Right ventricle myocardium superior (tissue), 1 donor: ENCODE measurements at regions of chr20 and their contacts with region 1.

Region 1: DNA sequence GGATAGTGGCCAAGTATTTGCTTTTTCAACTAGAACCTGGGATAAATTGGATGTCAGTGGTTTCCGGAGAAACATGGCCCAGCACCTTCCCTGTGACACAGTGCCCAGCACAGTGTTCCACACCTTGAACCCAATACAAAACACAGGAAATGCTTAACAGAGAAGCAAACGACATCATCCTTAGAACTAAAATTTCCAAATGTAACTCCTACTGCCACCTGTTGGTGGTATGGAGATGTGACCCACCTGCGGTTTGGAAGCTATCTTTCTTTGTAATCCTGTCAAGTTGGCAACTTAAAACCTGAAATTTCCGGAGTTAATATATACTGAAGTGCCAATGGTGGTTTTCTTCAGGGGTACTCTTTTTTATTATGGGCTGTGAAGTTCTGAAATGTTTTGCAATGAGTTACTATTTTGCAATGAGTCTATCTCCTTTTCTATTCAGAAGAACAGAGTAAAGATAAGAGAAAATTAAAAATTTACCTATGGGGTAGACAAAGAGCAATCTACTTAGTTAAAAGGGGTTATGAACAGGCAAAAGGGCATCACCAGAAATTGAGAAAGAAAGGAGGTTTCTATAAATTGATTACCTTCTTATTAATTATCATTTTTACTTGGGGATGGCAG is 658.8 kb downstream of the PTPRT start:
- DNase-seq: no peak
- ATAC-seq: no peak

Region 2: GRCh38 chr20:41738604-41739206 is 792.2 kb before region 1 on chr20:
- intact Hi-C with region 1: loop called (anchors 10 kb)
- DNase-seq: peak; percentile 64
- ATAC-seq: peak; percentile 72

Region 3: DNA sequence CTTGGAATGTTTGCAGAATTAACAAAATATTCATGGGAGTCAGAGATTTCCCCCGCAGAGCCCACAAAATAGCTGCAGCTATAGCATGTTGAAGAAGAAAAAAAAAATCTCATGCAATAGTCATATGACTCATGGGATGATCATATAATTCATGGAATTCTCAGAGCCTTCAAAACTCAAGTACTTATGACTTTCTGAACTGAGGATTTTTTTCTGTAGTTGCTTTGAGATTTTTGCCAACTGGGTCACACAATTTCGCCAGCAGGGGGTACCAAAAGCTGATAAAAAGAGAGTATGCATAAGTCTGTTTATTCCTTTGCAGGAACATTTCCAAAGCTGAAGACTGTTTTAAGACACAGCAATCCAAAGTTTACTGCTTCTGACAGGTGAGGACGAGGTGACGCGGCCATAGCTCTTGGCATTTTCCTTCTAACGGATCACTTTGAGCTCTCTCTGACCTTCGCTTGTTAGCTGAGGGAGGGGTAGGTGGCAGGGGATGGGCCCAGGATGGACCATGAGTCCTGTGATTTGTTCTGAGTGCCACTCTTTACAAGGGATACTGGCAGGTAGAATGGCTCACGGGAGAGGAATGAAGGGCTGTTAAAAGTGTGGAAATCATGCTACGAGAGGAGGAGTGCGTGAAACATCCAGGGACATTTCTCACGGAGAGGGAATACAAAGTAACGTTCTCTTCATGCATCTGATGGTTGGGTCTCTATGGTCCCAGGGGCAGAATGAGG is 326.6 kb before region 1 on chr20:
- intact Hi-C with region 1: loop called (anchors 10 kb)
- DNase-seq: no peak
- ATAC-seq: no peak

Region 4: DNA sequence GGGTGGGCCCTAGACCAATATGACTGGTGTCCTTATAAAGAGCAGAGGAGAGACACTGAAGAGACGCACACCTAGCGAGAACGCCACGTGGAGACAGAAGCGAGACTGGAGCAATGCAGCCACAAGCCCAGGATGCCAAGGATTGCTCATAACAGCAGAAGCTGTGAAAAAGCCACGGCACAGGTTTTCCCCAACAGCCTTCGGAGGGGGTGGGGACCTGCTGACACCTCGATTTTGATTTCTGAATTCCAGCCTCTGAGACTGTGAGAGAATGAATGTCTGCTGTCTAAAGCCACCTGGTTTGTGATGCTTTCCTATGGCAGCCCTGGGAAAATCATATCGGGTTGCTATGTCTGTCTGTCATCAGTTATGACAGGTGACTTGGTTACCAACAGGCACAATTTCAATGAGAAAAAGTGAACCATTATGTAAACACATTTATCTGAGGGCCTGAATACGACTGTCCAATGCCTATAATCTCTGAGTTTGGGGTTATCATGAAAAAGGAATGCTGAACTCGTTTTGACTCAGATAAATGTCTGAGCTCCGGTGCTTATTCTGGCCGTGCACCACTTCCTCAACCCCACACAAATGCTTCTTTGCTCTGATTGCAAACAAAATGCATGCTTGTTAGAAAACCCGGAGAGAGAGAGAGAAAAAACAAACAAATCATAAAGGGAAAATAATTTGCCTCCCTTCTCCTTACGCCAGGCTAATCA is 111.0 kb before region 1 on chr20:
- intact Hi-C with region 1: no loop called
- DNase-seq: no peak
- ATAC-seq: no peak

Region 5: GRCh38 chr20:42576191-42576590 is 45.3 kb after region 1 on chr20:
- intact Hi-C with region 1: no loop called
- DNase-seq: no peak
- ATAC-seq: no peak

Region 6: DNA sequence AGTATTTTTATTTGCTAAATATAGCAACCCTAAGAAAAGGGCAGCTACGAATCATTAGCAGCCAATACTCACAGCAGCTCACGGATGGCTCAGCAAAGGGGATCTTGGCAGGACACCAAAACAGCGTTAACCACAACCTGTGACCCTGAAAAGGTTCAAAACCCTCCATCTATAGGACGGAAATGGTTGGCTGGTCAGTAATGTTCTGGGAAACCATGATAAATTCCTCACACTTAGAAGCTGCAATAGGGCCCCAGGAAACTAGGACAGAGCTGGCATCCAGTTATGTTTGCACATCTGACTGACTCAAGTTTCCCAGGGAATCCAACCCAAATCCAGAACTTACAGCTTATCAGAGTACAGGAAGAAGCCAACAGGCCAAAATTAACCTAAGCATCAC is 689.7 kb after region 1 on chr20:
- intact Hi-C with region 1: no loop called
- DNase-seq: no peak
- ATAC-seq: no peak